ENCODE measurements at regions of chr9 and their contacts with region 1.

Region 1: DNA sequence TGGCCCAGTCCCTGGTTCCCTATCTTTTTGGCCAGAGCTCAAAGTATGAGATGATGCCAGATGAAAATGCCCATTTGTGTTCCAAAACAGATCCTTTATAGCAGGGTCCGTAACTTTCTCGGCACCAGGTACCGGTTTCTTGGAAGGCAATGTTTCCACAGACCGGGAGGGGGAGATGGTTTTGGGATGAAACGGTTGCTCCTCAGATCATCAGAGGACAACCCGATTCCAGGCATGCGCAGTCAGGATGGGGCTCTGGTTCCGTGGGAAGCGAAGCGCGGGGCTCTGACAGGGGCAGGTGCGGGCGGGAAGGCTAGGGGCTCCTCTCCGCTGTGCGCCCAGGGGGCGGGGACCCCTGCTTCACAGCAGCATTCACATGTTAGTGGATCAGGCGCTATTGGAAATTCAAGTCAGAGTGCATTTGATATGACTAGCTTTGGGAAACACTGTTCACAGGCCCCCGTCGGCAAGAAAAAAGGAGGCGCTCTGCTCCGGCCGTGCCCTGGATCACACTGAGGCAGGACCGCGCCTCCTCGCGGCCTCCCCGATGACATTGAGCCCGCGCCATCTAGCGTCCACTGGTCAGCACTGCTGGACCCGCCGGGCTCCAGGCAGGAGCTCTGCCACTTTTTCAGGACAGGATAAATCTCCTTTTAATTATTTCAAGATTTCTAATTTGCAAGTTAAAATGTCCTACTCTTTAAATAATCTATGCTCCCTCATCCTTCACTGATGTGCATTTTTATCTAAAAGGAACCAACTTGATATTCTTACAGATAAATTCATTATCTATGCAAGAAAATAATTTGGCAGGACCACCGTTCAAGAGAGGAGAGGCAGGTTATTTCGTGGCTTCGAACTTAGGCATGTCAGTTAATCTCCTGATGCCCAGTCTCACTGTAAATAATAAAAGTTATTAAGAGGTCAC is 190.0 kb downstream of the FANCC start:
- DNase-seq: peak; percentile 80 to 97
- H3K4me3 ChIP-seq: no peak overlapping the region
- CTCF ChIP-seq: peak in 1 of 3 donors; percentile 80
- POLR2A ChIP-seq: no peak

Region 2: DNA sequence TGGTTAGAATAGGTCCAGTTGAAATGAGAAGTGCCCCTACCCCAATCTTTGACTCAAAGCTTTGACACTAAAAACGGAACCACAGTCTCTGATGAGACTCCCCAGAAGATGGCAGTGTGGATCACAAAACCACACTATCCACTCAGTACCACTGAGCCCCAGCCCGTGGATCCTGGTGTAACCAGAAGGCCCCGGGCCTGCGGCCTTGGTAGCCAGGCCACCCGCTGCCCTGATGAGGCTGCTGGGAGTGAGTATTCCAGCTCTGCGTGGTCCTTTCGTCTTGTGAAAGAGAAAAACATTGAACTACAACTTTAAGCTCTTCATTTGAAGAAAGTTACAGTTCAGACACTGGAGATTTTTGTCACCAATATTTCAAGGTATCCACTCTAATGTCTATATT is 446.0 kb before region 1 on chr9:
- intact Hi-C with region 1: loop called (anchors 5 kb)
- DNase-seq: peak; percentile 72 to 89
- H3K4me3 ChIP-seq: no peak overlapping the region
- CTCF ChIP-seq: no peak
- POLR2A ChIP-seq: no peak

Region 3: DNA sequence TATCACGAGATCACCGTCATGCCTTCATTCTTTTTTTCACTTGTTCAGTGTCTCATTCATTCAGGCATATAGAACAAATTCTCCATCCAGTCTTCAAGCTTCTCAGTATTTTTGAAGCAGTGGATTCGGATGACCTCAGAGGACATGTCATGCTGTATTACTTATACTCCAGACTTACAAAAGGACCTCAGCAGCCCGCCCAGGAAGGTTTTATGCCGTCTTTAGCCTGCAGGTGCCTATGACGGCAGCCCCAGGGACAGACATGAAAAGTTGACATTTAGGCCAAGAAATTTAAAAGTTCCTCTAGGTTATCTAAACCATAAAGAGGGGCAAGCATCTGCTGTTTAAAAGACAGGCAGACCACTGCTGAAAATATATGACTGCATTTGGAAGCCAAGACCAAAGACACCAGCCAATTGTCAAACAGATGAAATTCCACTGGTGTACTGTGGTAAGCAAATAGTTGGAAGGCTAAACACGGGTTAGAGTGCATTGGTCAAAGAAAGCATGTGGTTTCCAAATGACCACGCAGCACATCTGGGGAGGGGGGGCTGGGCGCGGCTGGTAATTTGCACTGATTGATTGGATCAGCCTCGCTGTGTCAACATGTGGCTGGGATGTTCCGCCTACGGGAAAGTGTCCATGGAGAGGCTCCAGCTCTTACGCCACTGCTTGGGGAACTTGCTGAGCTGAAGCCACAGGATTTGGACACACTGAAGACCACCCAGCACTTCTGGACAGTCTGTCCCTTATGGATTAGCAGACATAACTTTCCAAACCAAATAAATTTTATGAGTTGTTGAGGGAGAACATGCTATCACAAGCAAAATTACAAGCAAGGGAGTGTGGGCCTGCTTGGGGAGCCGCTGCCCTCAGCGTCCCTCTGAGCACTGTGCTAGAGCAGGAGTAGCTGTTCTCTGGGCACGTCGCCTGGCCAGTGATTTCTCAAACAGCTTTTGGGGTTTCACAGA is 16.4 kb after region 1 on chr9:
- intact Hi-C with region 1: no loop called
- DNase-seq: peak; percentile 91 to 97
- H3K4me3 ChIP-seq: no peak overlapping the region
- CTCF ChIP-seq: no peak
- POLR2A ChIP-seq: no peak

Region 4: DNA sequence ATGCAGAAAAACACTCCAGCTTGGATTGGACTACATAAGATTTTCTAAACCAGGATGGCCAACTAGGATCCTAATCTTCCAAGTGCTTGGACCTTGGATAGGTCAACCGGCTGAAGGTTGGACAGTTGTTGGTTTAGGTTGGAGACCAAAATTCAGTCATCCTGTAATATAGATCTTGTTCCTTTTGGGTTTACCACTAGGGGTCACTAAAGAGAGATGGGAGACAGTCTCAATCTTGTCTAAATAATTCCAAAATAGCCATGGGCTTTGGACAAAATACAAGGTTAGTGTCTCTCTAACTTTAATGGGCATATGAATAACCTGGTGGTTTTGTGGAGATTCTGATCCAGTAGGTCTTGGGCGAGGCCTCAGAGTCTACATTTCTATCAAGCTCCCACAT is 599.2 kb after region 1 on chr9:
- intact Hi-C with region 1: no loop called
- DNase-seq: no peak
- H3K4me3 ChIP-seq: no peak overlapping the region
- CTCF ChIP-seq: no peak
- POLR2A ChIP-seq: no peak

Measured in lower leg skin (tissue), 4 donors.